ENCODE measurements at regions of chr16 and their contacts with region 1.

Region 1: GRCh38 chr16:30407102-30407803 is at the start of gene ZNF771:
- DNase-seq: peak; percentile 97
- H3K4me3 Mint-ChIP-seq: peak within 1 kb of the TSS; percentile 94
- H3K27ac Mint-ChIP-seq: peak within 1 kb of the TSS; percentile 99
- H3K4me1 Mint-ChIP-seq: peaks cover 29% of the 10 kb centered on the region
- H3K27me3 Mint-ChIP-seq: peaks cover 6% of the 10 kb centered on the region
- total RNA-seq, gene ZNF771: 8.6 and 10.3 TPM in 2 replicates

Region 2: DNA sequence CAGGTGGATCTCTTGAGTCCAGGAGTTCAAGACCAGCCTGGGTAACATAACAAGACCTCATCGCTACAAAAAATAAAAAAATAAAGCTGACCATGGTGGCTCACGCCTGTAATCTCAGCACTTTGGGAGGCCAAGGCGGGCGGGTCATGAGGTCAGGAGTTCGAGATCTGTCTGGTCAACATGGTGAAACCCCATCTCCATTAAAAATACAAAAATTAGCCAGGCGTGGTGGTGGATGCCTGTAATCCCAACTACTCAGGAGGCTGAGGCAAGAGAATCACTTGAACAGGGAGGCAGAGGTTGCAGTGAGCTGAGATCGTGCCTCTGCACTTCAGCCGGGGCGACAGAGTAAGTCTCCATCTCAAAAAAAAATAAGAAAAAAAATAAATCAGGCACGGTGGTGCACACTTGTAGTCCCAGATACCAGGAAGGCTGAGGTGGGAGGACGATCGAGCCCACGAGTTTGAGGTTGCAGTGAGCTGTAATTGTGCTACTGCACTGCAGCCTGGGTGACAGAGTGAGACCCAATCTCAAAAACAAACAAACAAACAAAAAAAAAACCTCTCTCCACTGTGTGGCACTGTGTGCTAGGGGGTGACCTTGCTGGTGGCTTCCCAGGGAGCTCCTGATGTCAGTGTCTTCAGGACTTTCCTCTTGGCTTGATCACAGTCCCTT is 264.4 kb before region 1 on chr16:
- intact Hi-C with region 1: no loop called
- DNase-seq: peak; percentile 82
- H3K4me3 Mint-ChIP-seq: no peak overlapping the region
- H3K27ac Mint-ChIP-seq: peak overlapping the region; percentile 40
- H3K4me1 Mint-ChIP-seq: peaks cover 22% of the 10 kb centered on the region
- H3K27me3 Mint-ChIP-seq: no peaks in the 10 kb centered on the region

Region 3: DNA sequence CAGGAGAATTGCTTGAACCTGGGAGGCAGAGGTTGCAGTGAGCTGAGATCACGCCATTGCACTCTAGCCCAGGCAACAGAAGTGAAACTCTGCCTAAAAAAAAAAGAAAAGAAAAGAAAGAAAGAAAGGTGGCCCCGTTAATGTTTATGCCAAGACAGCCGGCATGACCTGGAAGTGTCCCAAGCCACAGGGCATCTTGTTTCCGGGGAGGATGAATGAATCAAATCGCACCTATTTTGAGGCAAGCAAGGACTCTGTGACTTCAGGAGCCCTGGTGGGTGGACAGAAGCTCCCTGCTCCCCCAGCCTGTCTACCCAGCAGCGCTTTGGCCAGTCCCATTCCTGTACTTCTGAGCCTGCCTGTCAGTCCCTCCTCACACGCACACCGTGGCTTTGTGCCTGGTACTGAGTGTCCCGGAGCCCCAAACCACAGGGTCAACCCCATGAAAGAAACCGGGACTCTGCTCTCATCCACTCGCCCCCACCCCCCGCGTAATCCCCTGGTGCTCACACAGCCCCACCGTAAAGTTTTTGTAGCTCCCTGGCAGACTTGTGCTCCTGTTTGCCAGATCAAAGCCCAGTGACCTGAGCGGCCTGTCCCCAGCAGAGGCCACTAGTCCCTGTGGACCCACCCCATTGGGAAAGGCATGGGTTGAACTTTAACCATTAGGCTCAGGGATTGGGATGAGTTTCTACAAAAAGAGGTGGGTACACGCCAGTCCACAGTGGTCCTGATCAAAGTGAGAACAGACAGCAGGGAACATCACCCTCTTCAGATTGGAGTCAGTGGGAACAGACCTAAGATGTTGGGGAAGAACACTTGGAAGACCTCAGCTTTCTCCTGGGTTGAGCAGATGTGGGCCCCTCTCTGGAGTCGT is 71.4 kb before region 1 on chr16:
- intact Hi-C with region 1: loop called (anchors 5 kb)
- DNase-seq: no peak
- H3K4me3 Mint-ChIP-seq: peak overlapping the region; percentile 86
- H3K27ac Mint-ChIP-seq: peak overlapping the region; percentile 83
- H3K4me1 Mint-ChIP-seq: peaks cover 13% of the 10 kb centered on the region
- H3K27me3 Mint-ChIP-seq: no peaks in the 10 kb centered on the region

Region 4: DNA sequence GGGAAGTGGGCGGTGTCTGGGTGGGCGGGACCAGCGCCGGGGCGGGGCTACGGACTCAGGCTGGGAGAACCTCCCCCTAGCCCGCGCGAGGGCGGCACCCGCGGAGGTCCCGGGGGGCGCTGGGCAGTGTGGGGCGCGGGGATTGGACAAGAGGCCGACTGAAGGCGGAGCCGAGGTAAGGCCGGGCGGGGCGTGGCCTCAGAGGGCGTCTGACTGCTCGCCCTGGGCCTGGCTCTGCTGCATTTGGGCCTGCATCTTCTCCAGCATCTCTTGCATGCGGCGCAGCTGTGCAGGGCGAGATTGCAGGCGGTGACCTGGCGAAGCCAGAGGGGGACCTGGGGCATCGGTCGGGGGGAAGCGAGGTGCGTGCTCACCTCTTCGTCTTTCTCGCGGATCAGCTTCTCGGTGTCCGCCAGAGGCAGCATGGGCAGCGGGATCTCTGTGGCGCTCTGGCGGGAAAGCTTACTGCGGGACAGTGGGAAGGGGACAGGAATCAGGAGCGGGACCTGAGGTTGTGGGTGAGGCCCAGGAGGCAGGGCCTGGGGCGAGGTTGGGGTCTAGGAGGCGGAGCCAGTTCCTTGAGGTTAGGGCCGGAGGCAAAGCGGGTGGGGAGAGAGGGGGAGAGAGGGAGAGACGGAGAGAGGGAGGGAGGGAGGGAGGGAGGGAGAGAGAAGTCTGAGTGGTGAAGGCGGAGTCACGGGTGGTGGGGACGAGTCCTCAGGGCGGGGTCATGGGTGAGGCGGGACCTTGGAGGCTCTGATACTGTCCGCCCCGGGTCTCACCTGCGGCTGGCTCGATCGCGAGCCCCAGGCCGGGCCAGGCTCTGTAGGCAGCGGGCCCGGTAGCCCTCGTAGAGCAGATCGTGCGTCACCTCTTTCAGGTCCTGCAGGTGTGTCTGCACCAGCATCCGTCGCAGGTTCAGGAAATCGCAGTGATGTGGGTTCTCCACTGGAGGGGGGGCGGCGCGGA is 28.7 kb before region 1 on chr16:
- intact Hi-C with region 1: loop called (anchors 1 kb)
- DNase-seq: peak; percentile 99
- H3K4me3 Mint-ChIP-seq: peak overlapping the region; percentile 99
- H3K27ac Mint-ChIP-seq: peak overlapping the region; percentile 100
- H3K4me1 Mint-ChIP-seq: peaks cover 43% of the 10 kb centered on the region
- H3K27me3 Mint-ChIP-seq: no peaks in the 10 kb centered on the region

Region 5: DNA sequence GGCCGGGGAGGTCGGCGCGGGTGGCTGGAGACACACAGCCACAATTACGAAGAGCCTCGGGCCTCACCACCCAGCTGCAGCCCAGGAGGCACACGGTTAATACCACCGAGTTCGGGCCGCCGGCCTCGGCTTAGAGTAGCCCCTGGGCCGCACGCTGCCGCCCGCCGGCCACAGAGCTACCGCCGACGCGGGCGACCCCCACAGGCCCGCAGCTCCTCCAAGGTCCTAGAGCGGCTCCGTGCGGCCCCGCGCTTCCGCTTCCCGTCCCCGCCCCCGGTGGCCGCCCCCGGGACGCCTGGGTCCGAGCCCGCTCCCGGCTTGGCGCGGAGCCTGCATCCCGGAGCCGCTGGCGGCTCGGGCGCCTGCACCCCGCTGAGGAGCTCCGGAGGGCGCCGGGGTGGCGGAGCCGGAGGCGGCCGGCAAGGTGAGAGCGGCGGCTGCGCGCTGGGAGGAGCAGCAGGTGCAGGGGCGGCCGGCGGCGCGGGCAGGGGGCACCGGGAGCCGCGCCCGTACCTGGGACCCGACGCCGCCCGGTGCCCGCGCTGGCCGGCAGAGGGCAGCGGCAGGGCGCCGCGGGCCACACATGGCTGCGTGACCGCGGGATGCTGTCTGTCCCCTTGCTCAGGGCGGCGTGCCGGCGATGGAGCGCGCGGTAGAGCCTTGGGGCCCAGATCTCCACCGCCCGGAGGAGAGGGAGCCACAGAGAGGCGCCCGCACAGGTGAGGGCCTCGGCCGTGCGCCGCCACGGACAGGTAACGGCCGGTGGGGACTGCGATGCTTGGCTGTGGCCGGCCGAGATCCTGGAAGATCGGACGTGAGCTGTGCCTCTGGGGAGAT is 11.9 kb before region 1 on chr16 and contains the start of gene ZNF48:
- intact Hi-C with region 1: loop called (anchors 1 kb)
- DNase-seq: peak; percentile 90
- H3K4me3 Mint-ChIP-seq: peak within 1 kb of the TSS; percentile 96
- H3K27ac Mint-ChIP-seq: peak within 1 kb of the TSS; percentile 86
- H3K4me1 Mint-ChIP-seq: peaks cover 32% of the 10 kb centered on the region
- H3K27me3 Mint-ChIP-seq: no peaks in the 10 kb centered on the region
- total RNA-seq, gene ZNF48: 16.5 and 18.3 TPM in 2 replicates

Region 6: DNA sequence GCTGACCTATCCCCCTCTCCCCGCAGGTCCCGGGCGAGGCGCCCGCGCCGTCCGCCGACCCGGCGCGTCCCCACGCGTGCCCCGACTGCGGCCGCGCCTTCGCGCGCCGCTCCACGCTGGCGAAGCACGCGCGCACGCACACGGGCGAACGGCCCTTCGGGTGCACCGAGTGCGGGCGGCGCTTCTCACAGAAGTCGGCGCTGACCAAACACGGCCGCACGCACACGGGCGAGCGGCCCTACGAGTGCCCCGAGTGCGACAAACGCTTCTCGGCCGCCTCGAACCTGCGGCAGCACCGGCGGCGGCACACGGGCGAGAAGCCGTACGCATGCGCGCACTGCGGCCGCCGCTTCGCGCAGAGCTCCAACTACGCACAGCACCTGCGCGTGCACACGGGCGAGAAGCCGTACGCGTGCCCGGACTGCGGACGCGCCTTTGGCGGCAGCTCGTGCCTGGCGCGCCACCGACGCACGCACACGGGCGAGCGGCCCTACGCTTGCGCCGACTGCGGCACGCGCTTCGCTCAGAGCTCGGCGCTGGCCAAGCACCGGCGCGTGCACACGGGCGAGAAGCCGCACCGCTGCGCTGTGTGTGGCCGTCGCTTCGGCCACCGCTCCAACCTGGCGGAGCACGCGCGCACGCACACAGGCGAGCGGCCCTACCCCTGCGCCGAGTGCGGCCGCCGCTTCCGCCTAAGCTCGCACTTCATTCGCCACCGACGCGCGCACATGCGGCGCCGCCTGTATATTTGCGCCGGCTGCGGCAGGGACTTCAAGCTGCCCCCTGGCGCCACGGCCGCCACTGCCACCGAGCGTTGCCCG is 10.5 kb after region 1 on chr16:
- intact Hi-C with region 1: loop called (anchors 1 kb)
- DNase-seq: peak; percentile 97
- H3K4me3 Mint-ChIP-seq: peak overlapping the region; percentile 65
- H3K27ac Mint-ChIP-seq: peak overlapping the region; percentile 72
- H3K4me1 Mint-ChIP-seq: peaks cover 31% of the 10 kb centered on the region
- H3K27me3 Mint-ChIP-seq: no peaks in the 10 kb centered on the region

Region 7: DNA sequence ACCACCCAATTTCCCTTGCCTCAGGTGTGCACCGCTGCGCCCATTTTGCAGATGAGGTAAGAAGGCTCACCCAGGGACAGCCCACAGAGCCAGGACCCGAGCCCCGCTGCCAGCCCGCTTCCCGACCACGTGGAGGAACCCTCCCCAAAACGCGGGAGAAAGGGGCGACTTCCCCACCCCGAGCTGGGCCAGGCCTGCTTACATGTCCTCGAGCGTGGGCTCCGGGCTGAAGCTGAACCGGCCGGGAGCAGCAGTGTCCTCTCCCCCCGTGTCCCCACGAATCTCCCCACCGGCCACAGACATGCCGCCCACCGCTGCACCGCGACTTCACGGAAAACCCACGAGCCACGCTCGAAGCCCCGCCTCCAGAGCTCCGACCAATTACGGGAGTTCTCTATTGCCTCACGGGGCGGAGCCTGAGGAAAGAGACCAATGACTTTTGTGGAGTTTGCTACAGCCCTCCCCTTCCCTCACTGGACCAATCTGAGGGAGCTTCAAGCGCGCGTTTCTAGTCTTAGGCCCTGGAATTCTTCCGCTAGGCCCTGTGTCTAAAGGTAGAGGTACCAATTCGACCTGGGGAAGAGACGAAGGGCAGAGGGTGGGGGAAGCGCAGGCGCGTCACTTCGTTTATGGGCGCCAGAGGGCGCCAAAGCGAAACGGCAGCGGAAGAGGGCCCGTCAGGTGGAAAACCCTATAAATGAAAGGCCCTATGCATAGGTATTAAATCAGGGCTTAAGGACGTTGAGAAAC is 22.6 kb after region 1 on chr16 and contains the start of gene DCTPP1:
- intact Hi-C with region 1: no loop called
- DNase-seq: peak; percentile 99
- H3K4me3 Mint-ChIP-seq: no peak within 1 kb of the TSS
- H3K27ac Mint-ChIP-seq: no peak within 1 kb of the TSS
- H3K4me1 Mint-ChIP-seq: peaks cover 27% of the 10 kb centered on the region
- H3K27me3 Mint-ChIP-seq: no peaks in the 10 kb centered on the region
- total RNA-seq, gene DCTPP1: 167 and 176 TPM in 2 replicates

Region 8: DNA sequence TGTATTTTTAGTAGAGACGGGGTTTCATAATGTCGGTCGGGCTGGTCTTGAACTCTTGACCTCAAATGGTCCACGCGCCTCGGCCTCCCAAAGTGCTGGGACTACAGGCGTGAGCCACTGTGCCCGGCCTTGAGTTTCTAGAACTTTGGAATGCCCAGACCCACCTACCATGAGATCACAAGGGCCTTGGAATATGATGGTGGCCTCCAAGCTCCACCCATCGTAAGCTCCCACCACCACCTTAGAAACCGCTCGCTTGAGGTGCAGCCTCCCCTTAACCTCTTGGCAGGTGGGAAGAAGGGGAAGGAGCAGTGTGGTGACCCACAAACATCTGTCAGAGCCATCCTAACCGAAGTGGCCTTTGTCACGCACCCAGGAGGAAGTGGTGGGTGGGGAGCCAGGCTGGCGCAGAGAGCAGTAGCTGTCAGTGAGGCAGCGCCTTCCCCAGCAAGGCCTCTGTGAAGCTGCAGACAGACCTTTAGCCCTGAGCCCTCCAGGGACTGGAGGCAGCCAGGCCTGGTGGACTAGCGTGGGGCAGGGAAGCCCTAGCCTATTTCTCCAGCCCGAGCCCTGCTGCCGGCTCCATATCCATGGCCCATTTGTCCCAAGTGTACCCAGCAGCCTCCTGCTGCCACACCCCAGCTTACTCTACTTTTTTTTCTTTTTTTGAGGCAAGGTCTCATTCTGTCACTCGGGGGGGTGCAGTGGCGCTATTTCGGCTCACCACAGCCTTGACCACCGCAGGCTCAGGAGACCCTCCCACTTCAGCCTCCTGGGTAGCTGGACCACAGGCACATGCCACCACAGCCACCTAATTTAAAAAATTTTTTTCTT is 51.5 kb after region 1 on chr16:
- intact Hi-C with region 1: no loop called
- DNase-seq: peak; percentile 96
- H3K4me3 Mint-ChIP-seq: peak overlapping the region; percentile 75
- H3K27ac Mint-ChIP-seq: peak overlapping the region; percentile 95
- H3K4me1 Mint-ChIP-seq: peaks cover 68% of the 10 kb centered on the region
- H3K27me3 Mint-ChIP-seq: no peaks in the 10 kb centered on the region

Measured in activated CD4-positive, alpha-beta T cell treated with anti-CD3 and anti-CD28 coated beads, Interleukin-2, amount 10 ng/mL, durations not matched to agents 24 days and 14 days (primary cell).